A673 (cell line): ENCODE measurements at regions of chr2 and their contacts with region 1.

Region 1: GRCh38 chr2:176079831-176080539 is 3.8 kb downstream of the EVX2 start:
- DNase-seq: peak; percentile 87
- H3K4me3 ChIP-seq: peak overlapping the region; percentile 36
- H3K27ac ChIP-seq: no peak overlapping the region
- H3K4me1 ChIP-seq: peaks cover 34% of the 10 kb centered on the region
- H3K27me3 ChIP-seq: peaks cover 94% of the 10 kb centered on the region
- CTCF ChIP-seq: peak; percentile 91

Region 2: DNA sequence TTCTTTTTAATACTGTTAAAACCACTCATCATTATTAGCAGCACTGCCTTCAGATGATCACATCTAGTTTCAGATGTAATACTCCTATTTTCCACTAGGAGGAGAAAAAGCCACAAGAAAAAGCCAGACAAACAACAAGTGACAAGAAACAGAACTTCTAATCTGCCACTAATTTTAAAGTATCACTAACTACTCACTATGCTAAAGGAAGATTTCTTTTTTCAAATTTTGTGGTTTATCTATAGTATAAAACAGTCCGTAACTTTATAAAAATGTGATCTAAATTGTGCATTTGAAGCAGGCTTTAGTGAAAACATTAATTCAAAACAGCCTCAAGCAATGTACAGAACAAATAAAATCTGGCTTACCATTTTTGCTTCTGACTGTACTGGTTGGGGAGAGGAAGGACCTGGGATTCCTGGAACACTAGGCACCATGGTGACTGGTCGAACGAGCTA is 968.8 kb before region 1 on chr2:
- CTCF ChIA-PET with region 1: no interaction called
- POLR2A ChIA-PET with region 1: no interaction called
- intact Hi-C with region 1: loop called (anchors 5 kb)
- DNase-seq: peak; percentile 74
- H3K4me3 ChIP-seq: no peak overlapping the region
- H3K27ac ChIP-seq: peak overlapping the region; percentile 4
- H3K4me1 ChIP-seq: no peaks in the 10 kb centered on the region
- H3K27me3 ChIP-seq: no peaks in the 10 kb centered on the region
- CTCF ChIP-seq: peak; percentile 72

Region 3: DNA sequence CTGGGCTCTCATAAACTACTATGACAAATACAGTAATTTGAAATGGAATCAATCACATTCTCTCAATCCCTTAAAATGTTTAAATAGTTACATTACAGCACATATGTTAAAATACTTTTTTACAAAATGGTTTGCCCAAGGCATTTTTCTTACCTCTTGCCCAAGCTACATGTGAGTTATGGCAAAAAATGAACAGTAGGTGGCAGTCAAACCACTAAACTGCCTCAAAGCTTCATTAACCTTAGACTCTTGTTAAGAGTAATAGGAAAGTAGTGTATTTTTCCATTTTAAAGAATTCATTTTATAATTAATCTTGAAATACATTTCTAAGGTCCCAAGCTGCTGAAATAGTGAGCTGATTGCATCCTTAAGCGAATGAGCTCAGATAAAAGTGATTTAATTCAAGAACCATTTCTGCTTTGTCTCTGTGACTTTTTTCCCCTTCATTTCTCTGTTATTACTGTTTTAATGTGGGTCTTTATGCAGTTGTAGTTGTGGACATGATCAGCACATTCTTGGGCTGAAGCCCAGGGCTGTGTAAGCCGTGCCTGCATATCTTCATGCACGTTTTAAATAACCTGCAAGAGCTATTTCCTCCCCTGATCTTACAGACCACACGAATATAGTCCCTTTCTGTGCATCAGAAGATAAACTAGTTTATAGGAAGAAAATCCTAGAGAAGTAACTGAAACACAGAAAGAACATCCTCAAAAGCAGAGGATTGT is 389.7 kb before region 1 on chr2:
- CTCF ChIA-PET with region 1: interaction called, 9 read pairs
- POLR2A ChIA-PET with region 1: no interaction called
- intact Hi-C with region 1: loop called (anchors 2 kb)
- DNase-seq: peak; percentile 79
- H3K4me3 ChIP-seq: no peak overlapping the region
- H3K27ac ChIP-seq: no peak overlapping the region
- H3K4me1 ChIP-seq: peaks cover 4% of the 10 kb centered on the region
- H3K27me3 ChIP-seq: no peaks in the 10 kb centered on the region
- CTCF ChIP-seq: peak; percentile 82

Region 4: DNA sequence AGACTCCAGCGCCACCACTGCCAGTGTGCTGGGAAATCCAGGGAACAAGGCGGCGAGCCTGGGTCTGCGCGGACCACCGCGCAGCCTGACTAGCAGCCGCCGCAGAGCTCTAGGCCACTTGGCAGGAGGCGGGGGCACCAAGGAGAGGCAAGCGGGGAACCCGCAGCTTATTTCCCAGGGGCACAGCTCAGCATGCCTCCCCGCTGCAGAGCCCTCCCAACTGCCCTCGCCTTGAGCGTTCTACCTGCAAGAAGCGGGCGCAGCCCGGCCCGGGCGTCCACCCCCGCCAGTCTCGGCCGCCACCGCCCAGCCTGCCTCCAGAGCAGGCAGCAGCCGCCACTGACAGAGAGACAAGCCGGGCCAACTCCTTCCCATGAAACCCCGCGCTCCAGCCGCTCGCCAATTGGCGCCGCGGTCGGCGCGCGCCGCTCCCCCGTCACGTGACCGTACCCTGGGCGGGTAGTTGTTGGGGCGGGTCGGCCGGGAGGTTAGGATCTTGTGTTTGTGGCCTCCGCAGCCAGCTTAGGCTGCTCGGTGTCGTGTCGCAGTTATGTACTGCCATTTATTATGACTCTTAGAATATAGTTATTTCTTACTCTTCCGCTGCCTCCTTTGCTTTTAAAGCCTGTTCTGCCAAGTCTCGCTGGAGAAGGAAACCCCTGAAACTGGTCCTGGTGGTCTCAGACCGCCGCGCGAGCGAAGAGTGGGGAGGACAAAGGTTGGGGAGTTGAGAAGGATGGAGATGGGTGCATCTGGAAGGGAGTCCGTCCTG is 77.9 kb before region 1 on chr2 and contains the start of gene LNPK:
- CTCF ChIA-PET with region 1: no interaction called
- POLR2A ChIA-PET with region 1: no interaction called
- intact Hi-C with region 1: loop called (anchors 5 kb)
- DNase-seq: peak; percentile 95
- H3K4me3 ChIP-seq: peak within 1 kb of the TSS; percentile 67
- H3K27ac ChIP-seq: peak within 1 kb of the TSS; percentile 57
- H3K4me1 ChIP-seq: peaks cover 7% of the 10 kb centered on the region
- H3K27me3 ChIP-seq: no peaks in the 10 kb centered on the region
- CTCF ChIP-seq: no peak
- total RNA-seq, gene LNPK: 42.5 and 46.6 TPM in 2 replicates

Region 5: DNA sequence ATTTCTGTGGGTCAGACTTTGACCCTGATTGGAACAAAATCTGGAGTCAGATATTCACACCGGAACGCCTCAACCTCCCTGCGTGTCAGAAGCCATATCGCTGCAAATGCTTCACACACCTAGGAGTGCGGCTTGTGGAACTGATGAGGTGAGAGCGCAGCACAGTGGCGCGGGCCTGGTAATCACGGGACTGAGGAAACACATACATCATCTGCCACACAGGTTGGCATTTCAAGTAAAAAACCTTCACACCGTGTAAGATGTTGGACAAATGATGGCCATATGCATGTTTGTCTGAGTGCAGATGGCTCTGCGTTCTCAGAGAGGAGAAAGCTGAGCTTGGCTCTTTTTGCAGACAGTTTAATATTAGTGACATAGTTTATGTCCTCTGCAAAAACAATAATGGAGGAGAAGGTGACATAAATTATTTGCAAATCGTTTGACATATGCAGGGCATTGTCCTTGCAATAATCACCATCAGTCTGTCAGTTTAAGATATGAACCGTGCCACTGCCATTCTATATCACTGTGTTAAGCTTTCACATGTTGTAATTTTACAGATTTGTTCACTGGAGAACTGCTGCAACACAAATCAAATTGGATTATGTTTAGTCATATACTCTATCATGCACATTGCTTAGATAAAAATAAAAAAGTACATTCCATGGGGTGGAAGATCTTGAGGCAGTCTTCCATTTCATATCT is 290.6 kb after region 1 on chr2:
- CTCF ChIA-PET with region 1: no interaction called
- POLR2A ChIA-PET with region 1: no interaction called
- intact Hi-C with region 1: no loop called
- DNase-seq: no peak
- H3K4me3 ChIP-seq: no peak overlapping the region
- H3K27ac ChIP-seq: no peak overlapping the region
- H3K4me1 ChIP-seq: no peaks in the 10 kb centered on the region
- H3K27me3 ChIP-seq: no peaks in the 10 kb centered on the region
- CTCF ChIP-seq: no peak